ENCODE measurements at regions of chr4 and their contacts with region 1.

Region 1: DNA sequence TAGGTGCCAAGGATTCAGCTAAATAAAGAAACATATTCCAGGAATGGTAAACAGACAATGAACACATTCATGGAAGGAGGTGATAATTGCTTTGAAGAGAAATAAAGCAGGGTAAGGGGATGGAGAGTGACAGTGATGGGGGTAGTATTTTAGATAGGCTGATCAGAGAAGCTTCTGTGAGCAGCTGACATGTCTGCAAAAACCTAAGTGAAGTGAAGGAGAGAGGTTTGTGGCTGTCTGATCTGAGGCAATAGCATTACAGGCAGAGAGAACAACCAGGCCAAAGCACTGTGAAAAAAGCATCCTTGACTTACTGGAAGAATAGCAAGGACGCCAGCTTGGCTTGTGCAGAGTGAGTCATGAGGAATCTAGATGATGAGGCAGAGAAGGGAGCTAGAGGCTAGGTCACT is 271.9 kb upstream of the GATB start:
- DNase-seq: no peak
- ATAC-seq: peak; percentile 70 to 76

Region 2: GRCh38 chr4:151997461-151997860 is 35.3 kb before region 1 on chr4:
- intact Hi-C with region 1: loop called in 1 of 2 experiments (anchors 5 kb)
- DNase-seq: no peak
- ATAC-seq: no peak

Region 3: DNA sequence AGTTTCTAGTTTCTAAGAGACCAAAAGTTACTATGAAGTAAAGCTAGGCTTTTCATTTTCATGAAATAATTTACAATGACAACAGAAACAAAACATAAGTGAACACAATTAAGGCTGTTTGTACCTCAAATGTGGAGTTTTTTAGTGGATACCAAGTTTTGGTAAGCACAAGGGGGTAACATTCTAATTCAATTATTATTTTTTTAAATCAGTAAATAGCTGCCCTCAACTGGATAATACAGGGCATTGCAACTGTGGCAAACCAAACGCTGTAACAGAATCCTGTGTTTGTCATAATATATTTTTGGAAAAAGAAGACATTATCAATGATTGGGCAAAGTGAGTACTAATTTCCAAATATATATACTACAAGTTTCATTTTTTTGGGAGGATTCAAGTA is 352.8 kb after region 1 on chr4:
- intact Hi-C with region 1: loop called in 1 of 2 experiments (anchors 10 kb)
- DNase-seq: no peak
- ATAC-seq: no peak

Measured in left cardiac atrium (tissue), 4 donors.